T-cell (primary cell): ENCODE measurements at regions of chr18 and their contacts with region 1.

Region 1: GRCh38 chr18:32552421-32553030 is 81.8 kb upstream of the GAREM1 start:
- DNase-seq: peak in 34 of 35 experiments; percentile 2 to 79 (median 34)
- ATAC-seq: peak; percentile 50 to 64 (median 54)
- H3K4me3 ChIP-seq: no peak overlapping the region
- H3K4me3 Mint-ChIP-seq: no peak overlapping the region
- H3K27ac ChIP-seq: no peak overlapping the region
- H3K27ac Mint-ChIP-seq: no peak overlapping the region
- H3K4me1 ChIP-seq: no peaks in the 10 kb centered on the region
- H3K4me1 Mint-ChIP-seq: peaks cover 0 to 4% (median 0%) of the 10 kb centered on the region in 3 donors
- H3K27me3 ChIP-seq: peaks cover 0 to 8% of the 10 kb centered on the region in 2 experiments
- H3K27me3 Mint-ChIP-seq: peaks cover 15% of the 10 kb centered on the region in 2 donors

Region 2: DNA sequence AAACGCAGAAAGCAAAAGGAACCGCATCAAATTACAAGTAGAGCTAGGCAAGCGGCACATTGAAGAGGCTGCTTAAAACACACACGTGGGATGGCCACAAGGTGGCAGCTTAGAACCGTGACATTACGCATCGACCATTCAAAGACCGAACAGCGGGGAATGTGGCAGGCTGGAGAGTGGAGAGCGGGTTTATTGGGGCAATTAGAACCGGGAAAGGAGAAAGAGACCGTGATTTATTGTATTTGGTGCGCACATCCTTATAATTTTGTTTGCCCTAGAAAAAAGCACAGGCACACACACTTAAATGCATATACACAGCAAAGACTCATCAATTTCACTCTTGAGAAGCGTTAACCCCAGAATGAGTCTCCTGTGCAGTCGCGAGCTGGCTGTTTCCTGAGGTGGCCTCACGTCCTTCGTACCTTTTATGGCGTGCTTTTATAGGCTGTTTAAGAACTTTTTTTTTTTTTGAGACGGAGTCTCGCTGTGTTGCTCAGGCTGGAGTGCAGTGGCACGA is 394.4 kb before region 1 on chr18:
- CTCF ChIA-PET with region 1: interaction called, 25 to 53 read pairs
- POLR2A ChIA-PET with region 1: no interaction called
- DNase-seq: peak; percentile 37 to 87 (median 63)
- ATAC-seq: peak; percentile 90 to 96 (median 94)
- H3K4me3 ChIP-seq: peak overlapping the region; percentile 14 to 61
- H3K4me3 Mint-ChIP-seq: peak overlapping the region; percentile 58 to 68 (median 65)
- H3K27ac ChIP-seq: no peak overlapping the region
- H3K27ac Mint-ChIP-seq: no peak overlapping the region
- H3K4me1 ChIP-seq: peaks cover 0 to 4% of the 10 kb centered on the region in 2 experiments
- H3K4me1 Mint-ChIP-seq: peaks cover 5 to 9% (median 7%) of the 10 kb centered on the region in 3 donors
- H3K27me3 ChIP-seq: peaks cover 0 to 3% of the 10 kb centered on the region in 2 experiments
- H3K27me3 Mint-ChIP-seq: peaks cover 0 to 4% of the 10 kb centered on the region in 2 donors

Region 3: DNA sequence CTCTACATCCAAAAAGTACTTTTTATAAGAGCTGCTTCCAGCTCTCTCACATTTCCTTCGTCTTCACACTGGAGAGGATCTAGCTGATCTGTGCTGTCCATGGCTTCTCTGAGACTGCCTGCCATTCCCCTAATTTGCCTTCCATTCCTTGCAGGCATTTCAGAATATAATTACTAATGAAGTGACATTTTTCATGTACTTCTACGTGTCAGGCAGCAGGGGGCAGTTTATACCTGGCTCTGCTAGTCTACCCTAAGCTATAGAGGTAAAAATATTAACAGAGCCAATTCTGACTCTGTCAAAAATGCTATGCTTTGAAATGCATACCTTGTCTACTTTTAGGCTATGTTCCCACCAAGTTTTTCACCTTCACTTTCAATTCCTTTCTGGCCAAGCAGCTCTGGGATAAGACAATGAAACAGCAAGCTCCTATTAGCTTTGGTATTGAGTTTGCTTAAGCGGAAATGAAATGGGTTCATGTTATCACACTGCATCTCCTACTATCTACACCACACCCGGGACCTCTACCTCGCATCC is 280.8 kb before region 1 on chr18:
- CTCF ChIA-PET with region 1: interaction called, 5 to 11 read pairs
- POLR2A ChIA-PET with region 1: no interaction called
- DNase-seq: peak in 2 of 35 experiments; percentile 3 to 32
- ATAC-seq: peak in 1 of 4 experiments; percentile 25
- H3K4me3 ChIP-seq: no peak overlapping the region
- H3K4me3 Mint-ChIP-seq: no peak overlapping the region
- H3K27ac ChIP-seq: no peak overlapping the region
- H3K27ac Mint-ChIP-seq: no peak overlapping the region
- H3K4me1 ChIP-seq: no peaks in the 10 kb centered on the region
- H3K4me1 Mint-ChIP-seq: no peaks in the 10 kb centered on the region
- H3K27me3 ChIP-seq: peaks cover 0 to 11% of the 10 kb centered on the region in 2 experiments
- H3K27me3 Mint-ChIP-seq: peaks cover 6 to 15% of the 10 kb centered on the region in 2 donors

Region 4: DNA sequence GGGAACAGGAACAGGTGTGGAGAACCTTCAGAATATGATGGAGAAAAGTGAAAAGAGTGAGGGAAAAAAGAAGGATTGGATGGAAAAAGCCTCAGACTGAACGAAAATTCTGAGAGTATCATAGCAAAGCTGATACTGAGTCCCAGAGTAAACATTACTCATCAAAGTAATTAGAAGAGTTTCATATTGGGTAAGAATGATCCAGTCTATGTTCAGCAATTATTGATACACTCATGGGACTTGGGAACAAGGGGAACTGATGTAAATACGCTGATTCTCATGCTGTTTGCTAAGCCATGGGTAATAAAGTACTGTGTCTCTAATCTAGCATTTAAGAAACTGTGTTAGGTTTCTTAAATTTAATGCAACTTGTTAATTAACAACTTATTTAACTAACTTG is 1892.1 kb after region 1 on chr18:
- CTCF ChIA-PET with region 1: no interaction called
- POLR2A ChIA-PET with region 1: no interaction called
- DNase-seq: no peak
- ATAC-seq: no peak
- H3K4me3 ChIP-seq: no peak overlapping the region
- H3K4me3 Mint-ChIP-seq: no peak overlapping the region
- H3K27ac ChIP-seq: no peak overlapping the region
- H3K27ac Mint-ChIP-seq: no peak overlapping the region
- H3K4me1 ChIP-seq: no peaks in the 10 kb centered on the region
- H3K4me1 Mint-ChIP-seq: no peaks in the 10 kb centered on the region
- H3K27me3 ChIP-seq: no peaks in the 10 kb centered on the region
- H3K27me3 Mint-ChIP-seq: no peaks in the 10 kb centered on the region